HEK293 (cell line): ENCODE measurements at regions of chr1 and their contacts with region 1.

Region 1: GRCh38 chr1:17125756-17126237 is 6.5 kb upstream of the PADI2 start:
- H3K4me3 ChIP-seq: no peak overlapping the region
- H3K27ac ChIP-seq: no peak overlapping the region
- H3K4me1 ChIP-seq: peaks cover 17% of the 10 kb centered on the region
- CTCF ChIP-seq: peak; percentile 94

Region 2: GRCh38 chr1:17113963-17114362 is 11.8 kb before region 1 on chr1:
- CTCF ChIA-PET with region 1: interaction called, 10 read pairs
- POLR2A ChIA-PET with region 1: no interaction called
- H3K4me3 ChIP-seq: no peak overlapping the region
- H3K27ac ChIP-seq: no peak overlapping the region
- H3K4me1 ChIP-seq: no peaks in the 10 kb centered on the region; the same call in 1 of the 2 replicates
- CTCF ChIP-seq: no peak

Region 3: DNA sequence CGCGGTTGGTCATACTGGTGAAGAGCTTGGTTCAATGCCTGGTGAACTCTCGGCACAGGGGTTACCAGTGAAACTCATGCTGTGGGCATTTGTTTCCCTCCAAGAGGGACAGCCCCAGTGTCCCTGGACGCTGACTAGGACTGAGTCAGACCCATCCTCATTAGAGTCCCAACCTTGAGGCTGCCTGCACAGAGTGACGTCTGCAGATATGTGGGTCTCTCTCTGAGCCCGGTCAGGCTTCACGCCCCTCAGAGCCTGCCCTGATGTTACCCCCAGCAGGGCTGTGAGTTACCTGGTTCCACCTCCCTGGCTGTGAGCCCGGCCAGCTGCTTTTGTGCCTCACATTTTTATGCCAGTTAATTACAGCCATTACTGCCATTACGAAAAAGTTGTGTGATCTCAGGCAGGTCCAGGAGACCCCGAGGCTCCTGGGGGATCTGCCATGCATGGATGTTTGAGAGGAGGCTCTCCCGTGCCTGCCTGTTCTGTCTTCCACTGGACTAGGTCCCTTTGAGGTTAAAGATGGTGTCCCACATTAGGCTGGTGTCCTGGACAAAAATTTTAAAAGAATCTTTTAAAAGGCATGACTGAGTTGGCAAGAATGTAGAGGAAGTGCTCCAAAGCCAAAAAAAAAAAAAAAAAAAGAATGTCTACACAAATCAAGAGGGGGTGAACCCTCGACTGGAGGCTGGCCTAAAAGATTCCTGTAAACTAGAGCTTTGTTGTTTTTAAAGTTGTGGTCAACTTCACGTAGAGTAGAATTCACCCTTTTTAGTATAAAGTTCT is 42.5 kb after region 1 on chr1:
- CTCF ChIA-PET with region 1: interaction called, 12 read pairs
- POLR2A ChIA-PET with region 1: no interaction called
- H3K4me3 ChIP-seq: no peak overlapping the region
- H3K27ac ChIP-seq: no peak overlapping the region
- H3K4me1 ChIP-seq: no peaks in the 10 kb centered on the region
- CTCF ChIP-seq: no peak

Region 4: DNA sequence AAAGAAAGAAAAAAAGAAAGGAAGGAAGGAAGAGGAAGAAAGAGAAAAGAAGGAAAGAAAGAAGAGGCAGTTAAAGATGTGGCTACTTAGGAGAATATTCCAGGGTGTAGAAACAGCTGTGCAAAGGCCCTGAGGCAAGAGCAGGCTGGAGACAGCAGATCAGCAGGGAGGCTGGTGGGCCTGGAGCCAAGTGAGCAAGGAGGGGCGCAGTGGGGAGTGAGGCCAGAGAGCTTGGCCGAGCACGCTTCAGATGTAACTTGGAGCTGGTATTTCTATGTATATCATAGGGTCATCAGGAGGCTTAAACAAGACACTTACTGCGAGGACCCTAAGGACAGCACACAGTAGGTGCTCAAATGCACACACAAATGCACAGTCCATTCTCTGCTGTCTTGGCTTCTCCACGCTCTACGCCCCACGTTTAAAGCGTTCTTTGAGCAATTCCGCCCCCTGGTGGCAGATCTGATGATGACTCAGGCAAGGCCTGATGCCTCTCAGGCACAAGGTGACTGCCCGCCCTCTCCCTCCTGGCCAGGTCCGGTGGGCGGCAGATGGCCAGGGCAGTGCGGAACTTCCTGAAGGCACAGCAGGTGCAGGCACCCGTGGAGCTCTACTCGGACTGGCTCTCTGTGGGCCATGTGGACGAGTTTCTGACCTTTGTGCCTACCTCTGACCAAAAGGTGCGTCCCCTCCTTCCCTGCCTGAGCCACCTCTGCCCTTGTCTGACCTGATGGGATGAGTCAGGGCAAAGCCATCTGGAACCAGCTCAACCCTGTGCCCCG is 111.2 kb after region 1 on chr1:
- CTCF ChIA-PET with region 1: interaction called, 281 read pairs
- POLR2A ChIA-PET with region 1: interaction called, 7 read pairs
- H3K4me3 ChIP-seq: no peak overlapping the region
- H3K27ac ChIP-seq: no peak overlapping the region
- H3K4me1 ChIP-seq: peaks cover 14% of the 10 kb centered on the region
- CTCF ChIP-seq: peak; percentile 95

Region 5: DNA sequence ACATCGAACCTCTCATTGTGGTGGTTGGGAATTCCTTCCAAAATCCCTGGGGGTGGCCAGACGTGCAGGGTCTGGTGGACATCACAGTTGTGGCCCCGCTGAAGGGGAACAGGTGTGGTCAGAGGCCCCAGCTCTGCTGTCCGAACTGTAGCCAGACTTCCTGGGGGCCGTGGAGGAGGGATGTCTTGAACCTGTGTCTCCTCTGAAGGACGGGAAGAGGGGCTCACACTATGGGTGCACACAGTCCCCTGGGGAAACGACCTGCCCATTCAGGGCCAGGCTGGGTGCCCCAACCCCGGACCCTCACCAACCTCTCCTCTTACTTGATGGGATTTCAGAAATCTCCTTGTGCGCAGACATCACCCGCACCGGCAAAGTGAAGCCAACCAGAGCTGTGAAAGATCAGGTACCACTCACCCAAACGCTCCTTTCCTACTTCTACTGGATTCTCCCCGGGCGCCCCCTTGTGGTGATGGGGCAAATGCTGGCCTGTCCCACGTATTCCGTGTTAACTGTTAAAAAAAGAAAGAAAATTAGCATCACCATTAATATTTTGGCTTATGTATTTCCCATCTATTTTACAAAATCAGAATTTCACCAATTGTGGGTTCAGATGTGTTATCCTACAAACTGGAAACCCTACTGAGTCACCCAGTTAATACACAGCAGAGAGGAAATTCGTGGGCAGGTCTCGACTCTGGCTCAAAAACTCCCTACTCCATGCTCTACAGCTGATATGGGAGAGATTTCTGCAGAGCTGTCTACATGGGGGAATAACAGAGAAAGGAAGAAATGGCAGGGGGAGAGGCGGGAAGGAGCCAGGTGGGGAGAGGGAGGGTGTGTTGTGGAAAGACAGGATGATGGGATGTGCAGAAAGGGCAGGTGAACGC is 210.3 kb after region 1 on chr1:
- CTCF ChIA-PET with region 1: interaction called, 30 read pairs
- POLR2A ChIA-PET with region 1: no interaction called
- H3K4me3 ChIP-seq: no peak overlapping the region
- H3K27ac ChIP-seq: no peak overlapping the region
- H3K4me1 ChIP-seq: no peaks in the 10 kb centered on the region
- CTCF ChIP-seq: no peak; the same call in 1 of the 2 replicates